Left lung (tissue), 14 donors: ENCODE measurements at regions of chr4 and their contacts with region 1.

Region 1: GRCh38 chr4:39697740-39698423 is at the start of gene UBE2K:
- DNase-seq: peak; percentile 85 to 99 (median 92)
- ATAC-seq: peak; percentile 97
- H3K4me3 ChIP-seq: peak within 1 kb of the TSS; percentile 78 to 94
- H3K27ac ChIP-seq: peak within 1 kb of the TSS; percentile 96 to 97
- H3K4me1 ChIP-seq: peaks cover 18 to 41% of the 10 kb centered on the region in 2 donors
- H3K27me3 ChIP-seq: no peaks in the 10 kb centered on the region
- CTCF ChIP-seq: no peak
- polyA plus RNA-seq, gene UBE2K: 64.8 to 87.4 (median 75.9) TPM

Region 2: GRCh38 chr4:39394702-39395101 is 303.2 kb before region 1 on chr4:
- intact Hi-C with region 1: no loop called
- DNase-seq: no peak
- ATAC-seq: no peak
- H3K4me3 ChIP-seq: no peak overlapping the region
- H3K27ac ChIP-seq: no peak overlapping the region
- H3K4me1 ChIP-seq: no peaks in the 10 kb centered on the region
- H3K27me3 ChIP-seq: no peaks in the 10 kb centered on the region
- CTCF ChIP-seq: no peak

Region 3: DNA sequence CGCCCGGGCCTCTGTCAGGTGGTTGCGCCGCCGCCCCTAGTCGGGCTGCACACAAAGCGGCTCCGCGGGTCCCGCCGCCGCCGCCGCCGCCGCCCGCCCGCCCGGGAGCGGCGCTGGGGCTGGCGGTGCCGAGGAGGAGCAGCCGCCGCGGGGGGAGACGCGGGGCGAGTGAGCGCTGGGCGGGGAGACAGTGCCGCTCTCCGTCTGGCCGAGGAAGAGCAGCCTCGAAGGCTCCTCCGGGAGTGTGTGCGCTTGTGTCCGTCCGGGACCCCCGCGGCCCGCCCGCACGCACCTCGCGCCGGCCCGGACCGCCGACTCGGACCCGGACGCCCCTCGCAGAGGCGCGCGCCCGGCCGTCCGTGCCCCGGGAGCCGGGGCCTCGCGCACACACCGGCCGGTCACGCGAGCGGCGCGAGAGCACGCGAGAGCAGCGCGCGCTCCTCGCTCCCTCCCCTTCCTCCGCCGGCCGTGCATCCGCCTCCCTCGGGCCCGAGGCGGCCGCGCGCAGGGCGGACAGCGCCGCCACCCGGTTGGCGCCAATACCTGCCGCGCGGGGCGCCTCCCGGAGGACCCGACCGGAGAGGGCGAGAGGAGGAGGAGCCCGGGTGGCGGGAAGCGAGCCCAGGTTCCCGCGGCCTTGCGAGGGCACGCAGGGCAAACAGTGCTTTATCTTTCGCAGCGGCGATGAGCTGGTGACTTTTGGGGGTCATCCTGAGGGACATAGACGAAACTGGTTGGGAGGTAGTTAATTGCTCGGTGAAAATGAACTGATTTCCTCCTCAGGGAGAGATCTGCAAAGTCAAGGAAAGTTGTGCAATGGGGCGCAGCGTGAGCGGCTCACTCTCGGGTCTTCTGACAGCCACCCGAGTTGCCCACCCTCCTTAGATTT is 279.9 kb after region 1 on chr4 and contains the start of gene PDS5A:
- intact Hi-C with region 1: loop called in 1 of 2 experiments (anchors 10 kb)
- DNase-seq: peak; percentile 90 to 99 (median 94)
- ATAC-seq: peak; percentile 91
- H3K4me3 ChIP-seq: peak within 1 kb of the TSS; percentile 88 to 94
- H3K27ac ChIP-seq: peak within 1 kb of the TSS; percentile 94 to 95
- H3K4me1 ChIP-seq: peaks cover 11 to 36% of the 10 kb centered on the region in 2 donors
- H3K27me3 ChIP-seq: no peaks in the 10 kb centered on the region
- CTCF ChIP-seq: peak; percentile 73 to 91
- polyA plus RNA-seq, gene PDS5A: 66.4 to 78.6 (median 70.3) TPM